Posterior cingulate gyrus (tissue), 11 donors: ENCODE measurements at regions of chr3 and their contacts with region 1.

Region 1: GRCh38 chr3:127970966-127971592 is 56.0 kb downstream of the KBTBD12 start:
- DNase-seq: peak in 4 of 10 donors; percentile 28 to 44 (median 36)

Region 2: GRCh38 chr3:127574880-127575878 is 395.9 kb before region 1 on chr3:
- intact Hi-C with region 1: loop called (anchors 2 kb)
- DNase-seq: peak; percentile 73 to 98 (median 86)

Region 3: DNA sequence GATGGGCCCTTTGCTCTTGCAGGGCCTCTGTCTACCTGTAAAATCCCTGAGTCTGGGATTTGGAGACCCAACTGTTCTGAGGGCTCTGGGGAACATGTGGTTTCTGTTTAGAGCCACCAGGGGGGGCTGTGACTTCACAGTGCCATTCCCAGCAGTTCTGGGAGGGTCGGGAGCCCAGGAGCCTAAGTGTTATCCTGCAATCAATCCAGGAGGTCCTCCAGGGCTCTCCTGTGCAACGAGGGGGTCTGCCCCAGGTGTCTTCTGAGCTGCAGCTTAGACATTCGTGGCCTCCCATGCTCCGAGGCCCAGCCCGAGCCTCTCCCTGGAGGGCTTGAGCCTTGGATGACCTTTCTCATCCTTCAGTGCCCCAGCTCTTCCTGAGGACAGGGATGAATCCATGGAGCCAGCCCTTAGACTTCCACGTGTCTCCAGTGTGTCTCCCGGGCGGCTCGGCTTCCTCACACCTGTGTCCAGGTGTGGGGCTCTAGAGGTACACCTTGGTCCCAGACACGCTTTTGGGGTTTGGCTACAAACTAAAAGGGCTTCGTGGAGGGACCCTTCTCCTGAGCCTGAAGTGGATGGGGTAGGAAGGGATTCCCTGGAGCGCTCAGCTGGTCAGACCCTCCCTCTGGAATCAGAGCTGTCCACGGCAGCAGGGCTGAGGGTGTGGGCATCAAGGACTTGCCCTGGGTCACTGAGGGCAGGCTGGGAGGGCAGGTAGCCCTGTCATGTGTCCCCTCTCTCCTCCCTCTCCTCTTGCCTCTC is 318.7 kb before region 1 on chr3:
- intact Hi-C with region 1: loop called (anchors 1 kb)
- DNase-seq: peak in 6 of 10 donors; percentile 48 to 93 (median 64)

Region 4: DNA sequence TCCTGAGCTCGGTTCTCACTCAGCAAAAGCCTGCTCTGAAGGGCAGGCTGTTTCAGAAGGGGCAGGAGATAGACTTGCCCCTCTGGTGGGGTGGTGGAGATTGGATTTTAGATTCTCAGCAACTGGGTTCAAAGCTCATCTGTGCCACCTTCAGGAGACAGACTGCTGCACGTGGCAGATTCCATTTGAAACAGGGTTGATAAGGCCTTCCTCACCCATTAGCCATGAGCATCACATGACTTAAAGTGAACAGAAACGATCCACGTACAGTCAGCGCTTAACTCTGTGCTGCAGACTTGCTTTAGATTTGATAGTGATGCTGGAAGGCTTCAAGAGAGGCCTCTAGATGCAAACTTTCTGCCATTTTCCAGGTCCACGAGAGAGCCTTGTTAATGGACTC is 113.7 kb before region 1 on chr3:
- intact Hi-C with region 1: no loop called
- DNase-seq: no peak

Region 5: GRCh38 chr3:127940116-127940515 is 31.0 kb before region 1 on chr3:
- intact Hi-C with region 1: no loop called
- DNase-seq: no peak